ENCODE measurements at regions of chr5 and their contacts with region 1.

Region 1: GRCh38 chr5:119373449-119373858 is 17.6 kb downstream of the TNFAIP8 start:
- DNase-seq: no peak
- ATAC-seq: no peak
- H3K4me3 Mint-ChIP-seq: no peak overlapping the region
- H3K27ac Mint-ChIP-seq: peak overlapping the region; percentile 62
- H3K4me1 Mint-ChIP-seq: peaks cover 73% of the 10 kb centered on the region
- H3K27me3 Mint-ChIP-seq: no peaks in the 10 kb centered on the region
- CTCF ChIP-seq: no peak

Region 2: DNA sequence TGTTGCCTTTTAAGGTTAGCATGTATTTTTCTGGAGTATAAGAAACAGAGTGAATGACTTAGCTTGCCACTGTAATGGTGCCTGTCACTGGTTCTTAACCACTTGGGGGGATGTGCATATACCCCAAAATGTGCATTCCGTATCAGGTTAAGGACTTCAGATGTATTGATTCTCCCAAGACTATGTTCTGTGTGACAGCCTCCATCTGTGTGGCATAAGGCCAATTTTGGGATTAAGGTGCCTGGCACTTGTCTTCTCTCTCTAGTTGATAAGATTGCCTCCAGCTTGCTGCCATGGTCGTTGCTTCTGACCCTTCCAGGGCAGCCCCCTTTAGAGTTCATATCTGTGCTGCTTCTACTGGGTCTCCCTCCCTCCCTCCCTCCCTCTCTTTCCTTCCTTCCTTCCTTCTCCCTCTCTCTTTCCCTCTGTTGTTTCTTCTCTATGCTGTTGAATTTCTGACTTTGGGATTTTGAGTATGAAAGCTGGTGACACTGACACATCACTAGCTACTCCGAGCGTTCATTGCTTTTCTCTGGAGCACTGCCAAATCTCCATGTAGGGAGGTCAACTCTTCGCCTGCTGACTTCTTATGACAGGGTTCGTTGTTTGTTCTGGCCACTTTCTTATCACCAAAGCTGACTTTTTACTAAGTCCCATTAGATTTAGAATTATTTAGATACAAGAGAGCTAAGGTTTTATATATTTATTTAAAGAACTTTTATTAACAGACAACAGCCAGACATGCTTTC is 13.3 kb after region 1 on chr5:
- CTCF ChIA-PET with region 1: no interaction called
- POLR2A ChIA-PET with region 1: no interaction called
- intact Hi-C with region 1: loop called (anchors 1 kb)
- DNase-seq: no peak
- ATAC-seq: no peak
- H3K4me3 Mint-ChIP-seq: no peak overlapping the region
- H3K27ac Mint-ChIP-seq: peak overlapping the region; percentile 50
- H3K4me1 Mint-ChIP-seq: peaks cover 96% of the 10 kb centered on the region
- H3K27me3 Mint-ChIP-seq: no peaks in the 10 kb centered on the region
- CTCF ChIP-seq: no peak

Region 3: DNA sequence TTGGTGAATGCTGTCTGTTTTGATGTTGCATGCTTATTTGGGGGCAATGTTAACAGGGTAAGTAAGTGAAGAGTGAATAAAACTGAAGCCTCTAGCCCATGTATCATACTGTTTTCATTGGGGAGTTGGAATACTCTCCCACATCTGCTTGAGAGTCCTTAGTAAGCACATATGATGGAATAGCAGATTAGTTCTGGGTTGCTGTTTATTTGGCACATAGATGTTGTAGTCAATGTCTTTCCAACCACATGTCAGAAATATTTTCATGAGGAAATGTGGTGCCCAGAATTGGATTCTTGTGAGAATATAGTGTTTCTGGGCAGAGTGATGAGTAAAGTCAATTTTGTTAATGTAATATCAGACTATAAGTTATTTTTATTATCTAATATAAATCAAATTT is 1866.5 kb after region 1 on chr5:
- CTCF ChIA-PET with region 1: no interaction called
- POLR2A ChIA-PET with region 1: no interaction called
- intact Hi-C with region 1: no loop called
- DNase-seq: no peak
- ATAC-seq: no peak
- H3K4me3 Mint-ChIP-seq: no peak overlapping the region
- H3K27ac Mint-ChIP-seq: no peak overlapping the region
- H3K4me1 Mint-ChIP-seq: no peaks in the 10 kb centered on the region
- H3K27me3 Mint-ChIP-seq: no peaks in the 10 kb centered on the region
- CTCF ChIP-seq: no peak